Mucosa of descending colon (tissue), 3 donors: ENCODE measurements at regions of chr16 and their contacts with region 1.

Region 1: DNA sequence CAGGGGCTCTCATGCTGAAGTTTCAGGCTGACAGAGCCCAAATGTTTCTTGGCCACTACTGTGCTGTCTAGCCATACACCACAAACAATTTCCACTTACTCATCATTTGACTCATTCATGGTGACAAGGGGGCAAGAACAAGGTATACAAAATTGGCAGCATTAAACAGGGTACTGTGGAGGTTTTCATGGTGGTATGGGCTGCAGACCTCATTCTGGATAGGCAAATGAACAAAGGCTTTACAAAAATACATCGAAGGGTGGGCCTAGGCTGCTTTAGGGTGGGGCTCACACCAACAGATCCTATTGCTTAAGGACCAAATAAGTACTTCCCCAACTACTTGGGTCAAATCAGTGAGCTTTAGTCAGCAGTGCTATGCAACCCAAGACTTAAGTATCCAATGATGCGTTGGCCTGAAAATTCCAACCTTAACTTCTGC is 53.0 kb downstream of the N4BP1 start:
- DNase-seq: no peak
- ATAC-seq: peak; percentile 47
- H3K4me3 ChIP-seq: no peak overlapping the region
- H3K4me1 ChIP-seq: peaks cover 9% of the 10 kb centered on the region
- CTCF ChIP-seq: no peak

Region 2: GRCh38 chr16:48462201-48462600 is 94.7 kb before region 1 on chr16:
- intact Hi-C with region 1: no loop called
- DNase-seq: no peak
- ATAC-seq: no peak
- H3K4me3 ChIP-seq: no peak overlapping the region
- H3K4me1 ChIP-seq: no peaks in the 10 kb centered on the region
- CTCF ChIP-seq: no peak

Region 3: GRCh38 chr16:48609652-48610029 is 52.7 kb after region 1 on chr16:
- intact Hi-C with region 1: loop called in 1 of 2 experiments (anchors 10 kb)
- DNase-seq: peak in 1 of 3 donors; percentile 80
- ATAC-seq: peak; percentile 44
- H3K4me3 ChIP-seq: peak overlapping the region; percentile 90
- H3K4me1 ChIP-seq: peaks cover 47% of the 10 kb centered on the region
- CTCF ChIP-seq: no peak